Endothelial cell of umbilical vein (primary cell): ENCODE measurements at regions of chr9 and their contacts with region 1.

Region 1: GRCh38 chr9:20356403-20357035 is 265.8 kb downstream of the MLLT3 start:
- DNase-seq: peak; percentile 96
- H3K4me3 ChIP-seq: peak overlapping the region in 2 of 3 experiments; percentile 13 to 53
- H3K27ac ChIP-seq: peak overlapping the region; percentile 32
- H3K4me1 ChIP-seq: peaks cover 19% of the 10 kb centered on the region
- H3K27me3 ChIP-seq: no peaks in the 10 kb centered on the region
- CTCF ChIP-seq: peak; percentile 66 to 82
- POLR2A ChIP-seq: no peak

Region 2: DNA sequence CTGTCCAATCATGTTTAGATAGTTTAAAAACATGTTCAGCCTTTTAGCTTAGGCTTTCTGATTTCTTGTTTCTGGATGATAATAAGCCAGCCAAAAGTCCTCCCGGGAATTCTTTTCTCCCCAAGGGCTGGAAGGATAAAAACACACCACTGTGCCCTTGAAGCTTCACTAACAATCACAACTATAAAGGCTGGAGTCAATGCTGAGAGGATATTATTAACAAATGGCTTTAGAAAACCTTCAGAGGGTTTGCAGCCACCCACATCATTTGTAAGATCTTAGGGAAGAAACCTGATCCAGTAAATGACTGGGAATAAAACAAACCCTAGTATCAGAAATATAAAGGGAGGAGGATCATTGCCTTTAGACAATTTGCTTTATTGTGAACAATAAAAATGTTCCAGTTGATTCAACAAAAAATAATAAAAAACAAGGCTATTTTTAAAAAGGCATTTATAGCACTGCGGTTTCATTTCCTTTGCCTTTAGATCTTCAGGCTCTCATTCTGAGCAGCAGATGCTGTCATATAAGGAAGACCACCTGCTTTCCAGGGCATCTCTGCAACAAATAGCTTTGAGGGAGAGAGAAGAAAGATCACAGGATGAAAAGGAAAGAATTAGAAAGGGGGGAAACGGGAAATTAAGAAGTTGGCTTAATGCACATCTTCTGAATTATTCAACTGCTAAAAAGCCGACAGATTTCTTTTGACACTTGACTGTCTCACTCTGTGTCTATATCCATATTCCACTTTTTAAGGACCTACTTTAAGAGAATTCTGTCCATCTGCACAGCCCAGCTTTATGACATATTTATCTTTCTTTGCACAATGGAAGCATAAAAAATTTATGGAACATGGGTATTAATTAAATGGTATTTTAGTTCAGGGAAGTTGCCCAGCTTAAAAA is 290.5 kb before region 1 on chr9:
- CTCF ChIA-PET with region 1: no interaction called
- POLR2A ChIA-PET with region 1: no interaction called
- dilution Hi-C with region 1: no loop called
- intact Hi-C with region 1: no loop called
- DNase-seq: no peak
- H3K4me3 ChIP-seq: no peak overlapping the region
- H3K27ac ChIP-seq: no peak overlapping the region
- H3K4me1 ChIP-seq: no peaks in the 10 kb centered on the region
- H3K27me3 ChIP-seq: peaks cover 0 to 2% of the 10 kb centered on the region in 2 experiments
- CTCF ChIP-seq: no peak
- POLR2A ChIP-seq: no peak

Region 3: GRCh38 chr9:20315677-20316076 is 40.8 kb before region 1 on chr9:
- CTCF ChIA-PET with region 1: no interaction called
- POLR2A ChIA-PET with region 1: no interaction called
- dilution Hi-C with region 1: no loop called
- intact Hi-C with region 1: no loop called
- DNase-seq: no peak
- H3K4me3 ChIP-seq: no peak overlapping the region
- H3K27ac ChIP-seq: no peak overlapping the region
- H3K4me1 ChIP-seq: no peaks in the 10 kb centered on the region
- H3K27me3 ChIP-seq: no peaks in the 10 kb centered on the region
- CTCF ChIP-seq: no peak
- POLR2A ChIP-seq: no peak

Region 4: GRCh38 chr9:20552874-20553575 is 196.5 kb after region 1 on chr9:
- CTCF ChIA-PET with region 1: interaction called, 3 read pairs
- POLR2A ChIA-PET with region 1: no interaction called
- dilution Hi-C with region 1: no loop called
- intact Hi-C with region 1: loop called (anchors 5 kb)
- DNase-seq: peak; percentile 20
- H3K4me3 ChIP-seq: no peak overlapping the region
- H3K27ac ChIP-seq: no peak overlapping the region
- H3K4me1 ChIP-seq: peaks cover 10% of the 10 kb centered on the region
- H3K27me3 ChIP-seq: no peaks in the 10 kb centered on the region
- CTCF ChIP-seq: no peak
- POLR2A ChIP-seq: no peak